Naive thymus-derived CD4-positive, alpha-beta T cell (primary cell): ENCODE measurements at regions of chr4 and their contacts with region 1.

Region 1: GRCh38 chr4:25312496-25313200 is at the start of gene ZCCHC4:
- DNase-seq: peak; percentile 83 to 99 (median 92)
- ATAC-seq: peak; percentile 100
- H3K4me3 ChIP-seq: peak within 1 kb of the TSS; percentile 80
- H3K4me3 Mint-ChIP-seq: peak within 1 kb of the TSS; percentile 91 to 100 (median 98)
- H3K27ac ChIP-seq: peak within 1 kb of the TSS; percentile 71
- H3K27ac Mint-ChIP-seq: peak within 1 kb of the TSS; percentile 90 to 98 (median 95)
- H3K4me1 ChIP-seq: peaks cover 5 to 7% of the 10 kb centered on the region in 2 donors
- H3K4me1 Mint-ChIP-seq: peaks cover 11 to 34% (median 29%) of the 10 kb centered on the region in 7 donors
- H3K27me3 ChIP-seq: no peaks in the 10 kb centered on the region
- H3K27me3 Mint-ChIP-seq: peaks cover 0 to 10% (median 4%) of the 10 kb centered on the region in 5 donors
- total RNA-seq, gene ZCCHC4: 9.5 to 15.5 (median 13.6) TPM

Region 2: GRCh38 chr4:23789766-23790165 is 1522.9 kb before region 1 on chr4:
- CTCF ChIA-PET with region 1: no interaction called
- POLR2A ChIA-PET with region 1: no interaction called
- intact Hi-C with region 1: no loop called
- DNase-seq: no peak
- ATAC-seq: no peak
- H3K4me3 ChIP-seq: no peak overlapping the region
- H3K4me3 Mint-ChIP-seq: no peak overlapping the region
- H3K27ac ChIP-seq: no peak overlapping the region
- H3K27ac Mint-ChIP-seq: no peak overlapping the region
- H3K4me1 ChIP-seq: no peaks in the 10 kb centered on the region
- H3K4me1 Mint-ChIP-seq: no peaks in the 10 kb centered on the region
- H3K27me3 ChIP-seq: no peaks in the 10 kb centered on the region
- H3K27me3 Mint-ChIP-seq: no peaks in the 10 kb centered on the region

Region 3: GRCh38 chr4:24007860-24008261 is 1304.8 kb before region 1 on chr4:
- CTCF ChIA-PET with region 1: no interaction called
- POLR2A ChIA-PET with region 1: no interaction called
- intact Hi-C with region 1: no loop called
- DNase-seq: no peak
- ATAC-seq: no peak
- H3K4me3 ChIP-seq: no peak overlapping the region
- H3K4me3 Mint-ChIP-seq: no peak overlapping the region
- H3K27ac ChIP-seq: no peak overlapping the region
- H3K27ac Mint-ChIP-seq: no peak overlapping the region
- H3K4me1 ChIP-seq: no peaks in the 10 kb centered on the region
- H3K4me1 Mint-ChIP-seq: peaks cover 0 to 2% (median 0%) of the 10 kb centered on the region in 7 donors
- H3K27me3 ChIP-seq: no peaks in the 10 kb centered on the region
- H3K27me3 Mint-ChIP-seq: peaks cover 0 to 13% (median 5%) of the 10 kb centered on the region in 5 donors

Region 4: GRCh38 chr4:25159884-25160713 is 152.5 kb before region 1 on chr4 and contains the start of gene SEPSECS:
- CTCF ChIA-PET with region 1: interaction called, 11 read pairs
- POLR2A ChIA-PET with region 1: interaction called, 21 read pairs
- intact Hi-C with region 1: loop called (anchors 1 kb)
- DNase-seq: peak; percentile 82 to 96 (median 94)
- ATAC-seq: peak; percentile 89
- H3K4me3 ChIP-seq: peak within 1 kb of the TSS; percentile 75
- H3K4me3 Mint-ChIP-seq: peak within 1 kb of the TSS; percentile 87 to 97 (median 94)
- H3K27ac ChIP-seq: peak within 1 kb of the TSS; percentile 97
- H3K27ac Mint-ChIP-seq: peak within 1 kb of the TSS; percentile 93 to 98 (median 96)
- H3K4me1 ChIP-seq: peaks cover 4 to 14% of the 10 kb centered on the region in 2 donors
- H3K4me1 Mint-ChIP-seq: peaks cover 33 to 66% (median 52%) of the 10 kb centered on the region in 7 donors
- H3K27me3 ChIP-seq: no peaks in the 10 kb centered on the region
- H3K27me3 Mint-ChIP-seq: peaks cover 0 to 2% (median 0%) of the 10 kb centered on the region in 5 donors
- total RNA-seq, gene SEPSECS: 14.4 to 25.0 (median 17.2) TPM

Region 5: GRCh38 chr4:25330905-25331808 is 18.5 kb after region 1 on chr4:
- CTCF ChIA-PET with region 1: no interaction called
- POLR2A ChIA-PET with region 1: no interaction called
- intact Hi-C with region 1: loop called in 1 of 2 experiments (anchors 1 kb)
- DNase-seq: no peak
- ATAC-seq: peak; percentile 54
- H3K4me3 ChIP-seq: peak overlapping the region; percentile 57
- H3K4me3 Mint-ChIP-seq: peak overlapping the region; percentile 59 to 86 (median 76)
- H3K27ac ChIP-seq: peak overlapping the region; percentile 42
- H3K27ac Mint-ChIP-seq: peak overlapping the region; percentile 70 to 95 (median 85)
- H3K4me1 ChIP-seq: peaks cover 0 to 7% of the 10 kb centered on the region in 2 donors
- H3K4me1 Mint-ChIP-seq: peaks cover 7 to 31% (median 23%) of the 10 kb centered on the region in 7 donors
- H3K27me3 ChIP-seq: no peaks in the 10 kb centered on the region
- H3K27me3 Mint-ChIP-seq: no peaks in the 10 kb centered on the region

Region 6: DNA sequence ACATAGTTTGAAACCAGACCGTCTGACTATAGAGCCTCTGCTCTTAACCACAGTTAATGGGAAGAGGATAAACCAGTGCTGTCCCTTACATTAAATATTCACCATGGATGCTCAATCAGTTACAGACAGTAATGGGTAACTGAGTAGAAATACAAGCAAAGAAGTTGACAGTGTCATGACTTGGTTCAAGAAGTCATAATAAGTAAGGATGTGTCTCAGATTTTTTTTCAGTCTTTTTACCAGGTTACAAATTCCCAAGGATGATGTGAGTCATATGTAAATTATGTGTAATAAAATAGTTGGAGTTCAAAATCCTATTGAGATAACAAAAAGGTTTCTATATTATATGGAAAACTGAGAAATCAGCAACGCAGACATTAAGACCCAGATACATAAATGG is 31.0 kb after region 1 on chr4:
- CTCF ChIA-PET with region 1: no interaction called
- POLR2A ChIA-PET with region 1: no interaction called
- intact Hi-C with region 1: no loop called
- DNase-seq: no peak
- ATAC-seq: no peak
- H3K4me3 ChIP-seq: no peak overlapping the region
- H3K4me3 Mint-ChIP-seq: no peak overlapping the region
- H3K27ac ChIP-seq: no peak overlapping the region
- H3K27ac Mint-ChIP-seq: no peak overlapping the region
- H3K4me1 ChIP-seq: no peaks in the 10 kb centered on the region
- H3K4me1 Mint-ChIP-seq: peaks cover 0 to 5% (median 0%) of the 10 kb centered on the region in 7 donors
- H3K27me3 ChIP-seq: no peaks in the 10 kb centered on the region
- H3K27me3 Mint-ChIP-seq: no peaks in the 10 kb centered on the region

Region 7: DNA sequence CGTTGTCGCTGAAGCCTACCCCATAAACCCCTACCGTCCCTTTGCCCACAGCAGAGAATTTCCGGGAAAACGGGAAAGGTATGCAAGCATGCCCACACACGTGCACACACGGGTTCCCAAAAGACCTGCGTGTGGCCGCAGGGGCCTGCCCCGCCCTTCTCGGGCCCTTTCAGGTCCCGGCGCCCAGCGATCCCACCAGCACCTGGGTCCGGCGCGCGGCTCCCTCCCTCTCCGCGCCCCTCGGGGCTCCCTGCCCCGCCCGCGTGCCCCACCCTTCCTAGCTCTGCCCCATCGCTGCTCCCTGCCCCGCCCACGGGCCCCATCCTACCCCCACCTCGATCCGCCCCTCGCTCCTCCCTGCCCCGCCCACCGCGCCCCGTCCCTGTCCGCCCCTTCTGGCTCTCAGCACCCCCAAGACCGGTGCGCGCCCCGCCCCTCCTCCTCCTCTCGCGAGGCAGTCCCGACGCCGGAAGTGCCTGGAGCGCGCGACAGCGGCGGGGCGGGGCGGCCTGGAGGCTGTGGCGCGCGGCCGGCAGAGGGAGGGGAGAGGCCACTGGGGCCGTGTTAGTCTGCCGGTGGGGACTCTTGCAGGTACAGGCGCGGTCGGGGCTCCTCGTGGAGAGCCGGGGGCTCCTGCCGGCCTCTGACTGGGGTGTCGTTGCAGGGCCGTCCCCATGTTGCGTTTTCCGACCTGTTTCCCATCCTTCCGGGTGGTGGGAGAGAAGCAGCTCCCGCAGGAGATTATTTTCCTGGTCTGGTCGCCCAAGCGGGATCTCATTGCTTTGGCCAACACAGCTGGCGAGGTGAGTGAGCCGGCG is 64.3 kb after region 1 on chr4 and contains the start of gene ANAPC4:
- CTCF ChIA-PET with region 1: interaction called, 4 read pairs
- POLR2A ChIA-PET with region 1: interaction called, 14 read pairs
- intact Hi-C with region 1: loop called (anchors 1 kb)
- DNase-seq: peak; percentile 85 to 97 (median 92)
- ATAC-seq: peak; percentile 97
- H3K4me3 ChIP-seq: peak within 1 kb of the TSS; percentile 96
- H3K4me3 Mint-ChIP-seq: peak within 1 kb of the TSS in 2 of 10 donors; percentile 78 to 83
- H3K27ac ChIP-seq: peak within 1 kb of the TSS; percentile 76
- H3K27ac Mint-ChIP-seq: peak within 1 kb of the TSS in 7 of 9 donors; percentile 64 to 93 (median 83)
- H3K4me1 ChIP-seq: peaks cover 11 to 17% of the 10 kb centered on the region in 2 donors
- H3K4me1 Mint-ChIP-seq: peaks cover 0 to 18% (median 13%) of the 10 kb centered on the region in 7 donors
- H3K27me3 ChIP-seq: no peaks in the 10 kb centered on the region
- H3K27me3 Mint-ChIP-seq: no peaks in the 10 kb centered on the region
- total RNA-seq, gene ANAPC4: 40.6 to 55.3 (median 50.4) TPM

Region 8: GRCh38 chr4:25580633-25581467 is 268.2 kb after region 1 on chr4:
- CTCF ChIA-PET with region 1: no interaction called
- POLR2A ChIA-PET with region 1: no interaction called
- intact Hi-C with region 1: no loop called
- DNase-seq: no peak
- ATAC-seq: no peak
- H3K4me3 ChIP-seq: no peak overlapping the region
- H3K4me3 Mint-ChIP-seq: no peak overlapping the region
- H3K27ac ChIP-seq: no peak overlapping the region
- H3K27ac Mint-ChIP-seq: no peak overlapping the region
- H3K4me1 ChIP-seq: no peaks in the 10 kb centered on the region
- H3K4me1 Mint-ChIP-seq: no peaks in the 10 kb centered on the region
- H3K27me3 ChIP-seq: no peaks in the 10 kb centered on the region
- H3K27me3 Mint-ChIP-seq: peaks cover 0 to 8% (median 0%) of the 10 kb centered on the region in 5 donors

Region 9: DNA sequence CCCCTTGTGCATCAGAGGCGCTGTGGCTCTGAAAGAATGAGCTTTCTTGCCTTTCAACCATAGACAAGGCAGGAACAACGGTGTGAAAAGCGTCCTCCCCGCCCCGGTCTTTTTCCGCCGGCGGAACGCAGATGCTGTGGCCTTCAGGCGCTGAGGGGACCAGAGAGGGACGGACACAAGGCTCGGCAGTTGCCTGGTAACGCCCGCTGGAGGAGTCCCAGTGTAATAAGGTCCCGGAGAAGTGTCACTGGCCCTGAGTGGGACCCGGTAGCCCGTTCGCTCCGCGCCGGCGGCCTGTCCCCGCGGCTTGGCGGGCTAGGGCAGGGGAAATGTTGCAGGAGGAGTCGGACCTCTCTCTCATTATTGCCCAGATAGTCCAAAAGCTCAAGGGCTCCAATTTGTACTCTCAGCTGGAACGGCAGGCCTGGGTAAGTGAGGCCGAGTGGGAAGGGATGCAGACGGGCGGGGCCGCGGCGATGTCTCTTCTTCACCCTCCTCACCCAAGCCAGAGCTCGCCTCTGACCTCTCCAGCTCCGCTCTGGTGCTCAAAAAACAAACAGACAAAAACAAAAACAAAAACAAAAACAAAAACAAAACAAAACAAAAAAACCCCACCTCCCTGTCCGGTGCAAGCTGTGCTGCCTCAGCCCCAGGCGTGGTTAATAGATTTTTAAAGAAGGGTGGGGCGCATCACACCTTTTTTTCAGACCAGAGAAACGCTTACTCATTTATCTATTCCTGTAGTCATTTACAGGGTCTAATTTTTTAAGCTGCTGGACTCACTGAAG is 1271.4 kb after region 1 on chr4 and contains the start of gene TBC1D19:
- CTCF ChIA-PET with region 1: no interaction called
- POLR2A ChIA-PET with region 1: no interaction called
- intact Hi-C with region 1: loop called in 1 of 2 experiments (anchors 1 kb)
- DNase-seq: peak; percentile 77 to 92 (median 87)
- ATAC-seq: peak; percentile 96
- H3K4me3 ChIP-seq: peak within 1 kb of the TSS; percentile 83
- H3K4me3 Mint-ChIP-seq: peak within 1 kb of the TSS; percentile 86 to 98 (median 95)
- H3K27ac ChIP-seq: peak within 1 kb of the TSS; percentile 92
- H3K27ac Mint-ChIP-seq: peak within 1 kb of the TSS; percentile 96 to 100 (median 98)
- H3K4me1 ChIP-seq: peaks cover 10 to 11% of the 10 kb centered on the region in 2 donors
- H3K4me1 Mint-ChIP-seq: peaks cover 10 to 51% (median 28%) of the 10 kb centered on the region in 7 donors
- H3K27me3 ChIP-seq: no peaks in the 10 kb centered on the region
- H3K27me3 Mint-ChIP-seq: peaks cover 0 to 5% (median 0%) of the 10 kb centered on the region in 5 donors
- total RNA-seq, gene TBC1D19: 4.9 to 8.7 (median 6.4) TPM